Posterior cingulate gyrus (tissue), 11 donors: ENCODE measurements at regions of chr17 and their contacts with region 1.

Region 1: GRCh38 chr17:79991140-79991923 is 44.3 kb downstream of the TBC1D16 start:
- DNase-seq: peak; percentile 78 to 98 (median 89)

Region 2: DNA sequence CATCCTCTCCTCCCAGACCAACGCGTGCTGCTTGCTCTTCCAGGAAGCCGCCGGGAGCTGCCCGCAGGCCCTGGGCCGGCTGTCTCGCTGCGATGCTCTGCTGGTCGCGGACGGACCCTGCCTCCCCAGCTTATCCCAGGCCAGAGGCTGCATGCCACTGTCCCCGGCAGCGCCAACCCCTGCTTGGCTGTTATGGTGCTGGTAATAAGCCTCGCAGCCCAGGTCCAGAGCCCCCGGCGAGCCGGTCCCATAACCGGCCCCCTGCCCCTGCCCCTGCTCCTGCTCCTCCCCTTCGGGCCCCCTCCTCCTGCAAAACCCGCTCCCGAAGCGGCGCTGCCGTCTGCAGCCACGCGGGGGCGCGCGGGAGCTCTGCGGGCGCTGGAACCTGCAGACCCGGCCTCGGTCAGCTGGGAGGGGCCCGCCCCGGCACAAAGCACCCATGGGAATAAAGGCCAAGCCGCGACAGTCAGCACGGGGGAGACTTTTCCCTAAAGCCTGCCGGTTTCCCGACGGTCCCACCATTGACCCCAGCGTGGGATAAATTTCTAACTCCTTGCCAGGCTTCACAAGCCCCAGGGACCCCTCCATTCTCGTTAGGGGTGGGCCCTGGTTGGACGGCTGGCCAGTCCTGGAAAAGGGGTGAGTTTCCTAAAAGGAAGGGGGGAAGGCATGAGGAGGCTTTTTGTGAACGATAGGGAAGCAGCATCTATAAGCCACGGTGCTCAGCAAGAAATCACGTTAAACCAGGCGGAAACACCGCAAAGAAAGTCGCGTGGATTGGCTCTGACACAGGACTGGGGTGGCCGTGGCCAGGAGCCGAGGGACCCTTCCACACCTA is 249.4 kb before region 1 on chr17:
- intact Hi-C with region 1: loop called (anchors 5 kb)
- DNase-seq: peak; percentile 35 to 97 (median 82)

Region 3: GRCh38 chr17:79789534-79790353 is 201.6 kb before region 1 on chr17:
- intact Hi-C with region 1: loop called (anchors 2 kb)
- DNase-seq: peak in 5 of 10 donors; percentile 48 to 92 (median 78)

Region 4: DNA sequence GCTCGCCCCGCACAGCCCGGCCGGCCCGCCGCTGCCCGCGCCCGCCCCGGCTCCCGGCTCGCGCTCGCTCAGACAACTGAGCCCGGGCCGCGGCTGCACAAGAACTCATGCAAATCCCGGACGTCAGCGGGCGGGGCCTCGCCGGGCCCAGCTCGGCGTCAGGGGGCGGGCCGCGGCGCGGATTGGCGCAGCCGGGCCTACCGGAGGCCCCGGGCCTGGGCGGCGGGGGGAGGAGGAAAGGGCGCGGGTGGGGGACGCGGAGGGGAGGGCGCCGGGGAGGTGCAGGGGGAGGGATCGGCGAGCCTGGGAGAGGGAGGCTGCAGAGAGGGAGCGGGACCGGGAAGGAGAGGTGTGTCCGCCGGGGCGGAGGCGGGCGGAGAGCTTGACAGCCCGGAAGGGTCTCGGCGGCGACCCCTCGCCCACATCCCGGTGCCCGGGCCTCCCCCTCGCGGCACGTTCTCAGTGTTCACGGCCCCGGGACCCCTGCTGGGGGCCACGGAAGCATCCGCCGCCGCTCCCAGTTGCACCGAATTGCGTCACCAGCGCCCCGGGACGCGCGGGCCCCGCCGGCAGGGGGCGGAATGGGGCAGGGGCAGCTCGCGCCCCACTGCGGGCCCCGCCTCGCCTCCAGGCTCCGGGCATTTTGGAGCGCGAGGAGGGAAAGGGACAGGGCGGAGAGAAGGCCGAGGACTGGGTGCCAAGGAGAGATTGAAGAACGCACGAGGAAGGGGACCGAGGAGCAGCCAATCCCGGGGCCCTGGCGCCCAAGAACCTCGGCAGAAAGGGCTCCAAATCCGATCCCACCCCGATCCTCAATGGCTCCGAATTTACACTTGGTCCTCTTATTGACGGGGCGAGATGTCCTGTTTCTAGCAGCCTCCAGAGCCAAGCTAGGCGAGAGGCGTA is 151.7 kb before region 1 on chr17 and contains the start of gene CBX4:
- intact Hi-C with region 1: loop called (anchors 5 kb)
- DNase-seq: peak; percentile 88 to 99 (median 96)